ENCODE measurements at regions of chr16 and their contacts with region 1.

Region 1: DNA sequence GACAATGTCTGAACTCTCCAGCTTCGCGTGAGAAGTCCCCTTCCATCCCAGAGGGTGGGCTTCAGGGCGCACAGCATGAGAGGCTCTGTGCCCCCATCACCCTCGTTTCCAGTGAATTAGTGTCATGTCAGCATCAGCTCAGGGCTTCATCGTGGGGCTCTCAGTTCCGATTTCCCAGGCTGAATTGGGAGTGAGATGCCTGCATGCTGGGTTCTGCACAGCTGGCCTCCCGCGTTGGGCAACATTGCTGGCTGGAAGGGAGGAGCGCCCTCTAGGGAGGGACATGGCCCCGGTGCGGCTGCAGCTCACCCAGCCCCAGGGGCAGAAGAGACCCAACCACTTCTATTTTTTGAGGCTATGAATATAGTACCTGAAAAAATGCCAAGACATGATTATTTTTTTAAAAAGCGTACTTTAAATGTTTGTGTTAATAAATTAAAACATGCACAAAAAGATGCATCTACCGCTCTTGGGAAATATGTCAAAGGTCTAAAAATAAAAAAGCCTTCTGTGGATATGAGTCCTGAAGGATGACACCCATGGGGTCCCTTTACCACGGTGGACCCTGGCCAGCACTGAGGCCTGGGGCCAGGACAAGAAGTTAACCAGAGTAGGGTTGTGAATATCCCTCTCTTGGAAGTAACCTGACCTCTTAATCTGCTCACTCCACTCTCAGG is 10.5 kb upstream of the ITGAD start:
- DNase-seq: peak; percentile 80
- ATAC-seq: peak; percentile 87
- H3K4me3 Mint-ChIP-seq: no peak overlapping the region
- H3K27ac Mint-ChIP-seq: no peak overlapping the region
- H3K4me1 Mint-ChIP-seq: peaks cover 38% of the 10 kb centered on the region
- H3K27me3 Mint-ChIP-seq: peaks cover 8% of the 10 kb centered on the region

Region 2: DNA sequence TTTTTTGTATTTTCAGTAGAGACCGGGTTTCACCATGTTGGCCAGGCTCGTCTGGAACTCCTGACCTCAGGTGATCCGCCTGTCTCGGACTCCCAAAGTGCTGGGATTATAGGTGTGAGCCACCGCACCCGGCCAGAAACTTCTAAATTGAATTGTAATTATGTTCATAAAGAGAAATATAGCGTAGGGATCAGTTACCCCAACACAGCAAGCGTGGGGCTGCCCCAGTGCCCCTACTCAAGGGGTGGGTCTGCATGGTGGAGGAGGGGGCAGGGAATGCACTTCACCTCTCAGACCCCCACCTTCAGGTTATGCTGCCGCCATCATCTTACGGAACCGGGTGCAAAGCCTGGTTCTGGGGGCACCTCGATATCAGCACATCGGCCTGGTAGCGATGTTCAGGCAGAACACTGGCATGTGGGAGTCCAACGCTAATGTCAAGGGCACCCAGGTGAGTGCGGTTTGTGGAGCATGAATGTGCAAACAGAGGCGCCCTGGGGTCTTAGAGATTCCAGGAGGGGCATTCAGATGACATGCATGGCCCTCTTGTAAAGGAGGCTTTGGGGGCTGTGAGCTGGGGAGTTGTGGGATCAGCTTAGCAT is 104.9 kb before region 1 on chr16:
- CTCF ChIA-PET with region 1: no interaction called
- POLR2A ChIA-PET with region 1: no interaction called
- DNase-seq: no peak
- ATAC-seq: no peak
- H3K4me3 Mint-ChIP-seq: no peak overlapping the region
- H3K27ac Mint-ChIP-seq: no peak overlapping the region
- H3K4me1 Mint-ChIP-seq: no peaks in the 10 kb centered on the region
- H3K27me3 Mint-ChIP-seq: peaks cover 22% of the 10 kb centered on the region

Region 3: DNA sequence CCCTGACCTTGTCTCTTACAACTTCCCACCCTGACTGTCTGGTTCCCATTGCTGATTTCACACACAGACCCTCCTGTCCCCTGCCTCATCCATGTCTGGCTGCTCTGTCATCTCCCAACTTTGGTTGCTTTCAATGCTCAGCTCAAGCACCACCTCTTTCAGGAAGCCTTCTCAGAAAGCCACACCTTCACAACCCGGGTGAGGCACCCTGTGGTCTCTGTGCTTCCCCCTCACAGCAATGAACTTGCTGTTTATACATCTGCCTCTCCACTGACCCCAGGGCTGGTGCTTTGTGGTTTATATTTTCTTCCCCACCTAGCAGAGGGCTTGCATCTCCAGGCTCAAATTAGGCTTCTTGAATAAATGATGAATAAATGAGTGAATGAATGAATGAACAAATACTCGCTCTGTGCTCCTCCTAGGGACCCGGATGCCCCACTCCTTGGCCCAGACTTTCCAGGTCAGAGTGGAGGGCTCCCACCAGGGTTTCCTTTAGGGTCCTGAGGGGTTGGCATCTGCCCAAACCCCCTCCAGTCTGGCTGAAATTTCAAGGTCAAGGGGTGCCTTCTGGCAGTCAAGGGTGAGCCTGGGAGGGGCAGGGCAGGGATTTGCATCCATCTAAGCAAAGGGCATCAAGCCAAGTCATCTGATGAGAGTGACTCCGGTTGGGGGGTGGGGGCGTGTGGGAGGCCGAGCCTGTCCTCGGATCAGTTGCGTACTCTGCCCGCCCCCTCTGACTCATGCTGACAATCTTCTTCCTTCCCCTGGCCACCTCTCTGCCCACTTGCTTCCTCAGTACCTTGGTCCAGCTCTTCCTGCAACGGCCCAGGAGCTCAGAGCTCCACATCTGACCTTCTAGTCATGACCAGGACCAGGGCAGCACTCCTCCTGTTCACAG is 28.0 kb before region 1 on chr16 and contains the start of gene ITGAX:
- CTCF ChIA-PET with region 1: interaction called, 10 read pairs
- POLR2A ChIA-PET with region 1: interaction called, 7 read pairs
- DNase-seq: peak; percentile 85
- ATAC-seq: peak; percentile 90
- H3K4me3 Mint-ChIP-seq: peak within 1 kb of the TSS; percentile 67
- H3K27ac Mint-ChIP-seq: peak within 1 kb of the TSS; percentile 96
- H3K4me1 Mint-ChIP-seq: peaks cover 80% of the 10 kb centered on the region
- H3K27me3 Mint-ChIP-seq: no peaks in the 10 kb centered on the region
- total RNA-seq, gene ITGAX: 22.7 to 25.0 TPM

Region 4: DNA sequence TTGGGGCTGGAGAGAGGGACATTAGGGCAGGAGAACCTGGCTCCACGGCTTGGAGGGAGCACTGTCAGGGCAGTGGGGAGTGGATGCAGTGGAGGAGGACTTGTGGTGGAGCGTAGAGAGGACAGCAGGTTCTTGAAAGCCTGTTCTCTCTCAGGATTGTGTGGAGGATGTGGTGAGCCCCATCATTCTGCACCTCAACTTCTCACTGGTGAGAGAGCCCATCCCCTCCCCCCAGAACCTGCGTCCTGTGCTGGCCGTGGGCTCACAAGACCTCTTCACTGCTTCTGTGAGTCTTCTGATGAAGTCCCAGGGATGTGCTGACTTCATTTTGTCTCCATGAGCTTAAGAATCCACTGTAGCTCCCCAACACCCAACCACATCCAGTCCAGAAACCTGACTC is 32.1 kb after region 1 on chr16:
- CTCF ChIA-PET with region 1: interaction called, 14 read pairs
- POLR2A ChIA-PET with region 1: interaction called, 3 read pairs
- DNase-seq: peak; percentile 73
- ATAC-seq: peak; percentile 70
- H3K4me3 Mint-ChIP-seq: peak overlapping the region; percentile 16
- H3K27ac Mint-ChIP-seq: peak overlapping the region; percentile 80
- H3K4me1 Mint-ChIP-seq: peaks cover 60% of the 10 kb centered on the region
- H3K27me3 Mint-ChIP-seq: no peaks in the 10 kb centered on the region

Region 5: DNA sequence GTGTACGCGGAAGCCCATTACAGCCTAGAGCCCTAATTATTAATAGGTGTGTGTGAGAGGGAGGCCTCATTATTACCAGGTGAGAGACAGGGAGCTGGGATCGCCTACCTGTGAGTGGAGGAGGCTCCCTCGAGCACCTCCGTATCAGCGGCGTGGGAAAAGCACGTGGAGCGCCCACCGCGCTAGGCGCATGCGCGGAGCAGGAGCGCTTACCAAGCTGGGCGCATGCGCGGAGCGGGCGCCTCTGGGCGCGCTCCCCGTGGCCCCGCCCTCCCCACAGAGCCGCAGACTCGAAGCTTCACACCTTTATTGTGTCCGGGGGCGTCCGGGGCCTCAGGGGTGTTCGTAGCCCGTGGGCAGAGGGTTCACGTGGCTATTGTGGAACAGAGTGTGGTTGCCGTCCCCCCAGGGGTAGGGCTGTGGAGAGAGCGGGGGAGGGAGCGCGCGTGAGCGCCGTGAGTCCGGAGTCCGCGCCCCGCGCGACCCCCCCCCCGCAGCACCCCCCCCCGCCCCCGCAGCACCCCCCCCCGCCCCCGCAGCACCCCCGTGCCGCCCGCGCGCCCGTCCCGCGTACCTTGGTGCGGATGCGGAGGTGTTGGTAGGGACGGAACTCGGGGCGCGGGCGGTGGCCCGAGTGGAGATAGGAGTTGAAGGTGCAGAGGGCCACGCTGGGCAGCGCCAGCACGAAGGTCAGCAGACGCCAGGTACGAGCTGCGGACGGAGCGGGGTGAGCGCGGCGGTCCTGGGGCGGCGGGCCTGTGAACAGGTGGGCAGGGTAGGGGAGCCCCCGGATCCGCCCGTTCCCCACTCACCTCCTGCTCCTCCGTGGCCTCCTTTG is 45.0 kb after region 1 on chr16:
- CTCF ChIA-PET with region 1: interaction called, 14 read pairs
- POLR2A ChIA-PET with region 1: no interaction called
- DNase-seq: peak; percentile 62
- ATAC-seq: peak; percentile 35
- H3K4me3 Mint-ChIP-seq: no peak overlapping the region
- H3K27ac Mint-ChIP-seq: no peak overlapping the region
- H3K4me1 Mint-ChIP-seq: peaks cover 59% of the 10 kb centered on the region
- H3K27me3 Mint-ChIP-seq: peaks cover 10% of the 10 kb centered on the region

Region 6: GRCh38 chr16:31451681-31452351 is 69.2 kb after region 1 on chr16:
- CTCF ChIA-PET with region 1: interaction called, 12 read pairs
- POLR2A ChIA-PET with region 1: no interaction called
- DNase-seq: no peak
- ATAC-seq: no peak
- H3K4me3 Mint-ChIP-seq: no peak overlapping the region
- H3K27ac Mint-ChIP-seq: no peak overlapping the region
- H3K4me1 Mint-ChIP-seq: peaks cover 42% of the 10 kb centered on the region
- H3K27me3 Mint-ChIP-seq: no peaks in the 10 kb centered on the region